ENCODE measurements at regions of chr11 and their contacts with region 1.

Region 1: GRCh38 chr11:45655347-45655756 is 10.1 kb downstream of the CHST1 start:
- DNase-seq: peak; percentile 76 to 87
- ATAC-seq: peak; percentile 76 to 89 (median 82)
- H3K4me3 ChIP-seq: no peak overlapping the region
- H3K27ac ChIP-seq: no peak overlapping the region
- H3K4me1 ChIP-seq: peaks cover 20% of the 10 kb centered on the region
- H3K27me3 ChIP-seq: peaks cover 0 to 19% (median 0%) of the 10 kb centered on the region in 3 donors
- CTCF ChIP-seq: peak; percentile 89

Region 2: DNA sequence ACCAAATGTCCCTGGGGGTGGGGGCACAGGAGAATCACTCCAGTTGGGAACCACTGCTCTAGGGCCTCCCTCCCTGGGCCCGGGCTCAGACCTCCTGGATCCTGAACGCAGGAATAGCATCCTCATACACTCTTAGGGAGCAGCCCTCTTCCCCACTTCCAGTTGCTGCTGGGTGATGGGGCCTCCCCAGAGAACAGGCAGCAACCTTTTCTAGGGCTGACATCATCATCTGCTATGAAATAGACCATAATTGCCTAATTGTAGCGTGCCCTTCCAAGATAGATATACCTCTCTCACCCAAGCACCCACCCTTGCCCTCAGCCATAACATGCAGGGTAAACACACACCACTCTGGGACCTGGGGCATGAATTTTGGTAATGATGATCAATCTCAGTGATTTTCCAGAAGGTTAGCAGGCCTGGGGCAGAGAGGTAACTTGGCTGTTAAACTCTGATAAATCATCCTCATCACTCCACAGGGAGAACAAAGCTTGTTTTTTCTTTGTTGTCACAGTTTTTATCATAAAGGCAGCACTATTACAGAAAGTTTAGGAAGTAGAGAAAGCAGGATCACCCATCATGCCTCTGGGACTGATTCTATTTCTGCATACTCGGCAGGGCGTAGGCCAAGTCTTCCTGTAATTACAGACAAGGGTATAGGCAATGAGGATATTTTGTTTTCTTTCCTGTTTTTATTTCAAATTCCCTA is 597.3 kb before region 1 on chr11:
- intact Hi-C with region 1: no loop called
- DNase-seq: no peak
- ATAC-seq: no peak
- H3K4me3 ChIP-seq: no peak overlapping the region
- H3K27ac ChIP-seq: no peak overlapping the region
- H3K4me1 ChIP-seq: peaks cover 6% of the 10 kb centered on the region
- H3K27me3 ChIP-seq: no peaks in the 10 kb centered on the region
- CTCF ChIP-seq: no peak

Region 3: DNA sequence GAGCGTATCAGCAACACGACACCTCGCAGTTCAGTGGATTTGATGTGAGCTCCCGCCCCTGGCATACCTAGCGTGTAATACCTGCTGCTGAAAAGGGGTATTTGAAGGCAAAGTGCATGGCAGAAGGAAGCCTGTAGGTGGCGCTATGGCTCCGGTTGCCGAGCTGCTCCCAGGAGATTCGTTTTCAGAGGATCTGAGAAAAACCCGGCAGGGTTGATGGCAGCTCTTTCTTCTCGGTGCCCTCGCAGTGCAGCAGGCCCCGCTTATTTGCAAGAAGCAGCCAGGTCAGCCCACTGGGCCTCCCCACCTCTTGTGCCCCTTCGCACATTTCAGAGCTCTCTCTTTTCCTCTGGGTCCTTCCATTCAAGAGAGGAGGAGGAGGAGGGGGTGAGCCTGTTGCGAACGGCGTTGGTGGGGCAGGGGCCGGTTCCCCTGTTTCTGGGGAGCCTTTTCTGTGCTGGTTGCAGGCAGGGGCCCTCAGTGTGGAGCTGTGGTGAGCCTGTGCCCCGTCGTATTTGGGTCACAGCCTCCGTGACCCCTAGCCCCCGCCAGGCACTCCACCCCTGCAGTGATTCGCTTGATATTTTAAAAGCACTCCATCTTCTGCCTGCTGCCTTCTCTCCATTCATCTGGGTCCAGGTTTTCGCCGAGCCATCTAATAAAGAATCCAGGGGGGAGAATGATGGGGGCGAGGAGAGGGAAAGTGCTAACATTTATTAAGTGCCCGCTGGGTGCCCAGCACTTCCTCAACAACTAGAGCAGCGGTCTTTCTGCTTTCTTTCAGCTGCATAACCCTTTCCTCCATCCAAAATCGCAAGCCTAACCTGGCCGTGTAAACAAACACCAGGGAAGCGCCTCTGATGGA is 283.9 kb before region 1 on chr11:
- intact Hi-C with region 1: loop called (anchors 1 to 10 kb)
- DNase-seq: peak; percentile 45 to 68
- ATAC-seq: peak; percentile 59 to 74 (median 62)
- H3K4me3 ChIP-seq: no peak overlapping the region
- H3K27ac ChIP-seq: no peak overlapping the region
- H3K4me1 ChIP-seq: no peaks in the 10 kb centered on the region
- H3K27me3 ChIP-seq: peaks cover 0 to 16% (median 0%) of the 10 kb centered on the region in 3 donors
- CTCF ChIP-seq: peak; percentile 79

Region 4: GRCh38 chr11:45538363-45538762 is 117.0 kb before region 1 on chr11:
- intact Hi-C with region 1: loop called (anchors 1 to 5 kb)
- DNase-seq: peak; percentile 22 to 63
- ATAC-seq: peak; percentile 86 to 99 (median 94)
- H3K4me3 ChIP-seq: no peak overlapping the region
- H3K27ac ChIP-seq: no peak overlapping the region
- H3K4me1 ChIP-seq: no peaks in the 10 kb centered on the region
- H3K27me3 ChIP-seq: no peaks in the 10 kb centered on the region
- CTCF ChIP-seq: peak; percentile 42

Measured in psoas muscle (tissue), 8 donors.